Heart right ventricle (tissue), 16 donors: ENCODE measurements at regions of chr13 and their contacts with region 1.

Region 1: DNA sequence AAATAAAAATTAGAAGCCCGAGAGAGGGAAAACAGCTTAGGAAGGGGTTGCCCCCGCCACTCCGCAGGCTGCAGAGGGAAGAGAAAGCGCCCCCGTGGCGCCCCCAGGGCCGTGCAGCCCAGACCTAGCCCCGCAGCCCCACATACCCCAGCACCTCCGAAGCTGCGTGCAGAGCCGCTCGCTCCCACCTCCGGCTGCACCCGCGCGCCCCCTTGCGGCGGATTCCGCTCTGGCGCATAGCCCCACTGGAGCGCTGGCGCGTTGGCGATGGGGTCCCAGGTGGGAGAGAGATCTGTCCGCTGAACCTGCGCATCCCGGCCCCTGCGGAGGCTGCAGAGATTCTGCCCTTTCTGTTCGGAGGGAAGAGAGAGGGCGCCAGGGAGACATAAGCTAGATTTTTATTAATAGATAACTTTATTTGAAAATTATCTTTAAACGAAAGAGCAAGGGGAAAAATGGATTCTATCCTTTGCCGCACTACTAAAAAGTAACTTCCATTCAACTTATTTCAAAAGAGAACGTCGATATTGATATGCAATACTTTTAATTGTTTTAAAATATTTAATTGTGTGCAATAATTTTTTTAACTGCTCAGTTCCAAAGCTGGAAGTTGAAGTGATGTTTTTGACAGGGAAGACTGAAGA is 11.7 kb upstream of the CLN5 start:
- DNase-seq: peak; percentile 76 to 87
- ATAC-seq: peak; percentile 92 to 99 (median 96)
- H3K4me3 ChIP-seq: peak overlapping the region in 8 of 10 donors; percentile 12 to 43 (median 36)
- H3K27ac ChIP-seq: no peak overlapping the region
- H3K4me1 ChIP-seq: peaks cover 0 to 11% (median 6%) of the 10 kb centered on the region in 9 donors
- H3K27me3 ChIP-seq: peaks cover 0 to 42% (median 19%) of the 10 kb centered on the region in 7 donors
- CTCF ChIP-seq: peak; percentile 89 to 99 (median 98)

Region 2: GRCh38 chr13:75870397-75870903 is 1109.7 kb before region 1 on chr13:
- intact Hi-C with region 1: loop called in 7 of 10 experiments (anchors 5 to 10 kb)
- DNase-seq: no peak
- ATAC-seq: peak in 4 of 8 donors; percentile 21 to 43 (median 26)
- H3K4me3 ChIP-seq: peak overlapping the region in 9 of 10 donors; percentile 28 to 56 (median 39)
- H3K27ac ChIP-seq: peak overlapping the region in 1 of 10 donors; percentile 32
- H3K4me1 ChIP-seq: no peaks in the 10 kb centered on the region
- H3K27me3 ChIP-seq: peaks cover 0 to 4% (median 0%) of the 10 kb centered on the region in 7 donors
- CTCF ChIP-seq: peak; percentile 54 to 83 (median 78)

Region 3: DNA sequence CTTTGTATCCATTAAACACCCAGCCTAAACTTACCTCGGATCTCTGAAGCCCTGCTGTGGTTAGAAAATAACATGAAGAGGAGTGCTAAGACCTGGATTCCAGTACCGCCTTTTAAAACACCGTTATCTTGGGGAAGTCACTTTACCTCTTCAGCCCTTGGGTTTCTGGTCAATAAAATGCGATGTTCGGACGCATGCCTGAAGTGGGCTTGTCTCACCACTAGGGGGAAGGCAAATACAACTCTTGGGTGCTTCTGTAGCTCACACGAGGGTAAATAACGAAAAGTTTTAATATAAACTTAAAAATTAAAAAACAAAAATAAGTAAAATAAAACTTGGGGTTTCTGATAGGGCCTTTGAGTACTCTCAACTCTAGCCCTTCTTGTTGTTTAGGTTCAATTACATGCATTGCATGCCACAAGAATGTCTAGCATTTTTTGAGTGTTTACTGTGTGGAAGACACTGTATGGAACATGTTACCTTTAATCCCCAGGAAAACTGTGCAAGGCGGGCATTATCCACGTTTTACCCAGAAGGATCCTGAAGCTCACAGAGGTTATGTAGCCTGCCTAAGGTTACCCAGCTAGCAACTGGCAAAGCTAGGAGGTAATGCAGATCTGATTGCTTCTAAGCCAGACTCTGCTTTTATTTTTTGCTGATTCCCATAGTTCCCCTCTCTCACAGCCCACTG is 1103.7 kb before region 1 on chr13:
- intact Hi-C with region 1: loop called in 7 of 10 experiments (anchors 5 to 10 kb)
- DNase-seq: peak in 1 of 2 donors; percentile 64
- ATAC-seq: peak; percentile 71 to 92 (median 87)
- H3K4me3 ChIP-seq: no peak overlapping the region
- H3K27ac ChIP-seq: no peak overlapping the region
- H3K4me1 ChIP-seq: peaks cover 0 to 7% (median 0%) of the 10 kb centered on the region in 9 donors
- H3K27me3 ChIP-seq: no peaks in the 10 kb centered on the region
- CTCF ChIP-seq: peak; percentile 87 to 95 (median 89)

Region 4: DNA sequence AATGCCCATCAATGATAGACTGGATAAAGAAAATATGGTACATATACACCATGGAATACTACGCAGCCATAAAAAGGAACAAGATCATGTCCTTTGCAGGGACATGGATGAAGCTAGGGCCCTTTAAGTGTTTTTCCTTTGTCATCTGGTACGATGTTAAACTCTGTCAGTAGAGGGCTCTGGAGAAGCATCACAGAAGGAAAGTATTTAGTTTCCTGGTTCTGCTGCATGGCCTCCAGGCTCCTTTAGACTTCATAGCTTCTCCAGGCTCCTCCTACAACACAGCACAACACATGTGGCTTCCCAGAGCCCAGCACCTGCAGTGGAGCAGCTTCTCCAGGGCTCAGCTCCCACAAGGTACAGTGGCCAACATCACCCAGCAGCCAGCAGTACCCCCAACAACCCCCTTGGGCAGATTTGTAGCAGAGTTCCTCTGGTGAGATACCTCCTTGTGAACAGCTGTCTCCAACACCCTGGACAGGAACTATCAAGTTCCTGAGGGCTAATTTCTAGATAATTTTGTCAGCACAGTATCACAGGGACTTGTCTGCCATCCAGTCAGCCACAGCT is 157.4 kb before region 1 on chr13:
- intact Hi-C with region 1: loop called in 2 of 10 experiments (anchors 10 kb)
- DNase-seq: no peak
- ATAC-seq: peak in 6 of 8 donors; percentile 30 to 71 (median 53)
- H3K4me3 ChIP-seq: no peak overlapping the region
- H3K27ac ChIP-seq: peak overlapping the region in 2 of 10 donors; percentile 21 to 52
- H3K4me1 ChIP-seq: peaks cover 0 to 22% (median 0%) of the 10 kb centered on the region in 9 donors
- H3K27me3 ChIP-seq: no peaks in the 10 kb centered on the region
- CTCF ChIP-seq: peak in 7 of 9 donors; percentile 18 to 56 (median 42)